ENCODE measurements at regions of chr16 and their contacts with region 1.

Region 1: DNA sequence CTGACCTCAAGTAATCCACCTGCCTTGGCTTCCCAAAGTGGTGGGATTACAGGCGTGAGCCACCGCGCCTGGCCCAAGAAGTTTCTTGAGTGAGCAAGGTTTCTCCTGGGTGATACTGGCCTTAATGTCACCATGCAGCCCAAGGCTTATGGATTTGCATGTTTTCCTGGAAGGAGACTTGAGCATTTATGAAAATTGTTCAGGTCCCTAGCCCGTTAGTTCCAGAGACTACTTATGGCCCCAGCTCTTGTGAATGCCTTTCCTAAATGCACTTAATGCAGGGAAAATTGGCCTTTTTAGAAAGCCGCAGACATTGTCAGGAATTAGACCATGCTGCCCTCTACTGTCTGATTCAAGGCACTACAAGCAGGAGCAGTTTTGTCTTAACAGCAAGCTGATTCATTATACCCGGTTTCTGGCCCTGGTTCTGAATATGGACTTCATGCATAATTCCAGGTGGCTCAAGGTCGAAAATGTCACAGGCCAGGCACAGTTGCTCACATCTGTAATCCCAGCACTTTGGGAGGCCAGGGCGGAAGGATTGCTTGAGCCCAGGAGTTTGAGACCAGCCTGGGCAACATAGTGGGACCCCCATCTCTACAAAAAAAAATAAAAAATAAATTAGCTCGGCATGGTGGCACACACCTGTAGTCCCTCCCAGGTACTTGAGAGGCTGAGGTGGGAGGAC is 91.3 kb downstream of the SNX29 start:
- DNase-seq: peak; percentile 25 to 72
- H3K4me3 ChIP-seq: no peak overlapping the region
- H3K27ac ChIP-seq: no peak overlapping the region
- H3K4me1 ChIP-seq: no peaks in the 10 kb centered on the region
- H3K27me3 ChIP-seq: no peaks in the 10 kb centered on the region
- CTCF ChIP-seq: peak in 2 of 3 experiments; percentile 83 to 91; a peak in 3 of 4 replicates
- EP300 ChIP-seq: no peak
- POLR2A ChIP-seq: no peak
- RAD21 ChIP-seq: peak; percentile 93 to 98

Region 2: DNA sequence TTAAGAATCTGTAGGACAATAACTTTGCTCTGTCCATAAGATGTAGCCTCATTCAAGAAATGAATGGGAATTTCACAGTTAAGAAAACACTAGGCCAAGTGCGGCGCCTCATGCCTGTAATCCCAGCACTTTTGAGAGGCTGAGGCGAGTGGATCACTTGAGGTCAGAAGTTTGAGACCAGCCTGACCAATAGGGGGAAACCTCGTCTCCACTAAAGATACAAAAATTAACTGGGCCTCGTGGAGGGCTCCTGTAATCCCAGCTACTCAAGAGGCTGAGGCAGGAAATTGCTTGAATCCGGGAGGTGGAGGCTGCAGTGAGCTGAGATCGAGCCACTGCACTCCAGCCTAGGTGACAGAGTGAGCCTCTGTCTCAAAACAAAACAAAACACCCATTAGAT is 196.7 kb before region 1 on chr16:
- CTCF ChIA-PET with region 1: interaction called, 10 read pairs
- POLR2A ChIA-PET with region 1: no interaction called
- DNase-seq: peak in 1 of 2 experiments; percentile 38
- H3K4me3 ChIP-seq: no peak overlapping the region
- H3K27ac ChIP-seq: no peak overlapping the region
- H3K4me1 ChIP-seq: no peaks in the 10 kb centered on the region
- H3K27me3 ChIP-seq: no peaks in the 10 kb centered on the region
- CTCF ChIP-seq: peak; percentile 18 to 35 (median 29); a peak in 3 of 4 replicates
- EP300 ChIP-seq: no peak
- POLR2A ChIP-seq: no peak
- RAD21 ChIP-seq: peak; percentile 16 to 47; a peak in 2 of 4 replicates

Region 3: GRCh38 chr16:11915644-11916523 is 152.0 kb before region 1 on chr16 and contains the start of gene GSPT1:
- CTCF ChIA-PET with region 1: interaction called, 14 read pairs
- POLR2A ChIA-PET with region 1: no interaction called
- DNase-seq: peak; percentile 95 to 99
- H3K4me3 ChIP-seq: peak within 1 kb of the TSS; percentile 77 to 99 (median 92)
- H3K27ac ChIP-seq: no peak within 1 kb of the TSS
- H3K4me1 ChIP-seq: peaks cover 0 to 8% (median 6%) of the 10 kb centered on the region in 4 experiments; a peak in 2 of 7 replicates
- H3K27me3 ChIP-seq: no peaks in the 10 kb centered on the region
- CTCF ChIP-seq: no peak
- EP300 ChIP-seq: no peak; a peak in 1 of 3 replicates
- POLR2A ChIP-seq: peak; percentile 55 to 81
- RAD21 ChIP-seq: no peak
- total RNA-seq, gene GSPT1: 195 and 204 TPM in 2 replicates

Region 4: GRCh38 chr16:11964761-11965551 is 102.9 kb before region 1 on chr16 and contains the start of gene TNFRSF17:
- CTCF ChIA-PET with region 1: interaction called, 16 read pairs
- POLR2A ChIA-PET with region 1: no interaction called
- DNase-seq: no peak
- H3K4me3 ChIP-seq: no peak within 1 kb of the TSS
- H3K27ac ChIP-seq: no peak within 1 kb of the TSS
- H3K4me1 ChIP-seq: no peaks in the 10 kb centered on the region
- H3K27me3 ChIP-seq: no peaks in the 10 kb centered on the region
- CTCF ChIP-seq: no peak
- EP300 ChIP-seq: no peak
- POLR2A ChIP-seq: no peak
- RAD21 ChIP-seq: no peak
- total RNA-seq, gene TNFRSF17: not detected in 2 replicates

Region 5: GRCh38 chr16:11977376-11978041 is 90.3 kb before region 1 on chr16:
- CTCF ChIA-PET with region 1: interaction called, 33 read pairs
- POLR2A ChIA-PET with region 1: interaction called, 3 read pairs
- DNase-seq: no peak
- H3K4me3 ChIP-seq: peak overlapping the region; percentile 77 to 96 (median 88); a peak in 7 of 8 replicates
- H3K27ac ChIP-seq: no peak overlapping the region
- H3K4me1 ChIP-seq: peaks cover 0 to 6% (median 2%) of the 10 kb centered on the region in 4 experiments; a peak in 3 of 7 replicates
- H3K27me3 ChIP-seq: no peaks in the 10 kb centered on the region
- CTCF ChIP-seq: no peak
- EP300 ChIP-seq: no peak
- POLR2A ChIP-seq: no peak
- RAD21 ChIP-seq: no peak

Region 6: DNA sequence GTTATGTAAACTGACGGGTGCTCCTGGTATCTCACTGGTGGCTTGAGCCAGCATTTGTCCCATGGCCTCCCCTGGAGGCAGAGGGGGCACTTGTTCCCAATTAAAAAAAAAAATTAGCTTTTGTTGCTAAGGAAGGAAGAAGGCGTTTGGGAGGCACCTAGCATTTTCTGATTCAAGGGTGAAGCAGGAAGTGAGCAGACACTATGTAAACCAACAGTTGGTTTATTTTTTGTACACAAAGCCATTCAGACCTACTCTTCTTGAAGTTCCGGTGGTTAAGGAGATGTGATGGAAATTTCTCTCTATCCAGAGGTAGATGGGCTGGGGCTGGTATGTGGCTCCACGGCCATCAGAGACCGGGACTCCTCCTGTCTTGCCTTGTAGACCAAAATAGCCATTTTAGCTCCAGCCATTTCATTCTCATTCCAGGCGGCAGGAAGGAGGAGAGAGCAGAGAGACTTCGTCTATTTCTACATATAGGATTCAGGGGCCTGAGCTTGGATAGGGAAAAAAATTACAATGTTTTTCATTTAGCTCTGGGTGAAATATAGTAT is 11.6 kb after region 1 on chr16:
- CTCF ChIA-PET with region 1: interaction called, 14 read pairs
- POLR2A ChIA-PET with region 1: no interaction called
- DNase-seq: no peak
- H3K4me3 ChIP-seq: no peak overlapping the region
- H3K27ac ChIP-seq: no peak overlapping the region
- H3K4me1 ChIP-seq: no peaks in the 10 kb centered on the region
- H3K27me3 ChIP-seq: no peaks in the 10 kb centered on the region
- CTCF ChIP-seq: no peak
- EP300 ChIP-seq: no peak
- POLR2A ChIP-seq: no peak
- RAD21 ChIP-seq: no peak

Measured in H1 (cell line).